ENCODE measurements at regions of chr10 and their contacts with region 1.

Region 1: GRCh38 chr10:105339669-105340068 is 698.6 kb downstream of the SORCS3 start:
- DNase-seq: no peak
- H3K4me3 ChIP-seq: no peak overlapping the region
- H3K27ac ChIP-seq: no peak overlapping the region
- H3K4me1 ChIP-seq: no peaks in the 10 kb centered on the region
- H3K27me3 ChIP-seq: no peaks in the 10 kb centered on the region
- CTCF ChIP-seq: no peak

Region 2: DNA sequence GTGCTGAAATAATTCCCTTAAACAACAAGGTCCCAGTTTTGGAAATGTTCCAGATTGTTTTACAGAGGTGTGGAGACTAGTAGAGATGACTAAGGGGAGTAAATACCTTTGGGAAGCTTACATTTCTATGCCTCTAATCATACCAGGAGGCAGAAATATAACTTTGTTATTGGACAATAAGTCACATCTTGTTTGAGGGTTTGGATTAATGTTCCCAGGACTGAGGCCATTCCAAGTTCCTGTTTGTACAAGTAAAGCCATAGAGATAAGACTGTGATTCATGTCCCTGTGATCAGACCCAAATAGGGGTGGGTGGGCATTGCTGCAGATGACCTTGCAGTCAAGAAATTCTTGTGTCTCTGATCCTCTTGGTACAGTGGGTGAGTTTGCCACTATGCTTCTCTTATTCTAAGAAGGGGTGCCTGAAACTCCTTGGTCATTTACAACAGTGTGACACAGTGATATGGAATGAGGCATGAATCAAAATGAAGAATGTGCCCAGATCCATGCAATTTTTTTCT is 190.2 kb before region 1 on chr10:
- intact Hi-C with region 1: no loop called
- DNase-seq: peak in 1 of 5 donors; percentile 4
- H3K4me3 ChIP-seq: no peak overlapping the region
- H3K27ac ChIP-seq: no peak overlapping the region
- H3K4me1 ChIP-seq: peaks cover 0 to 3% (median 0%) of the 10 kb centered on the region in 3 donors
- H3K27me3 ChIP-seq: no peaks in the 10 kb centered on the region
- CTCF ChIP-seq: no peak

Region 3: DNA sequence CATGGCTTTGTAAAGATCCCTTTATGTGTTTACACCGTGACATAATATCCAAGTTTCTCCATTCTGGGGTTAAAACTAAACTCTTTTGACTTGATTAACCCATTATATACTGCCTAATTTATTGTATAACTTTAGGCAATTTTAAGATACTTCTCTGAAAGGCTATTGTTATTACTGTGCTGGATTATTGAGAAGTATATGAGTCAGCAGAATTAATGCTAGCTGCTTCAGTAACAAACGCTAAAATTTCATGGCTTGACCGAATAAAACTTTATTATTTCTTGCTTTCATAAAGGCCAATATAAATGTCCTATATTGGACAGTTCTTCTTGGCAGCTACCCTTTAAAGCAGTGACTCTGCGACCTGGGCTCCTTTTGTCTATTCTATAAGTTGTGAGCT is 155.3 kb after region 1 on chr10:
- intact Hi-C with region 1: loop called (anchors 5 kb)
- DNase-seq: no peak
- H3K4me3 ChIP-seq: no peak overlapping the region
- H3K27ac ChIP-seq: no peak overlapping the region
- H3K4me1 ChIP-seq: no peaks in the 10 kb centered on the region
- H3K27me3 ChIP-seq: no peaks in the 10 kb centered on the region
- CTCF ChIP-seq: no peak